Naive thymus-derived CD4-positive, alpha-beta T cell (primary cell): ENCODE measurements at regions of chr17 and their contacts with region 1.

Region 1: DNA sequence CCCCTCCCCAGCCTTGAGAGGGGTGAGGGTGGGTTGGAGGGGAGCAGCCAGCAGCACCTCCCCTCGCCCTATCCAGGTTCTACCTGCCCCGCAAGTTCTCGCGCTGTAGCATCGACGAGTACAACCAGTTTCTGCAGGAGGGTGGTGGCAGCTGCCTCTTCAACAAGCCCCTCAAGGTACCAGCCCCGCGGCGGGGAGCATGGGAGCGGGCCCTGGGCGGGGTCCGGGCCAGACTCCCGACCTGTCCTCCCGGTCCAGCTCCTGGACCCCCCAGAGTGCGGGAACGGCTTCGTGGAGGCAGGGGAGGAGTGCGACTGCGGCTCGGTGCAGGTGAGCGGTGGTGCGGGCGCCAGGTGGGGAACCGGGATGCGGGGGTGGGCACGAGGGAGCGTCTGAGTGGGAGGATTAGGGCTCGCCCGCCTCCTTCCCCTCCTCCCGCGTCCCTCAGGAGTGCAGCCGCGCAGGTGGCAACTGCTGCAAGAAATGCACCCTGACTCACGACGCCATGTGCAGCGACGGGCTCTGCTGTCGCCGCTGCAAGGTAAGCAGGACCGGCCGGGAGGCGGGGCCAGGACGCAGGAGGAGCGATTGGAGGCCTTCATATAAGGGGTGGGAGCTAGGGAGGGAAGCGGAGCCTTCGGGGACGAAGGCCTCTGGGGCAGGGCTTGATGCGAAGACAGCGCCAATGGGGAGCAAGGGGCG is 16.5 kb downstream of the ADAM11 start:
- DNase-seq: peak in 8 of 9 donors; percentile 83 to 95 (median 94)
- ATAC-seq: peak; percentile 96
- H3K4me3 ChIP-seq: peak overlapping the region; percentile 87
- H3K4me3 Mint-ChIP-seq: peak overlapping the region; percentile 88 to 93 (median 90)
- H3K27ac ChIP-seq: peak overlapping the region; percentile 76
- H3K27ac Mint-ChIP-seq: peak overlapping the region in 7 of 9 donors; percentile 58 to 80 (median 73)
- H3K4me1 ChIP-seq: peaks cover 0 to 11% of the 10 kb centered on the region in 2 donors
- H3K4me1 Mint-ChIP-seq: peaks cover 0 to 14% (median 9%) of the 10 kb centered on the region in 7 donors
- H3K27me3 ChIP-seq: no peaks in the 10 kb centered on the region
- H3K27me3 Mint-ChIP-seq: peaks cover 0 to 10% (median 5%) of the 10 kb centered on the region in 5 donors

Region 2: DNA sequence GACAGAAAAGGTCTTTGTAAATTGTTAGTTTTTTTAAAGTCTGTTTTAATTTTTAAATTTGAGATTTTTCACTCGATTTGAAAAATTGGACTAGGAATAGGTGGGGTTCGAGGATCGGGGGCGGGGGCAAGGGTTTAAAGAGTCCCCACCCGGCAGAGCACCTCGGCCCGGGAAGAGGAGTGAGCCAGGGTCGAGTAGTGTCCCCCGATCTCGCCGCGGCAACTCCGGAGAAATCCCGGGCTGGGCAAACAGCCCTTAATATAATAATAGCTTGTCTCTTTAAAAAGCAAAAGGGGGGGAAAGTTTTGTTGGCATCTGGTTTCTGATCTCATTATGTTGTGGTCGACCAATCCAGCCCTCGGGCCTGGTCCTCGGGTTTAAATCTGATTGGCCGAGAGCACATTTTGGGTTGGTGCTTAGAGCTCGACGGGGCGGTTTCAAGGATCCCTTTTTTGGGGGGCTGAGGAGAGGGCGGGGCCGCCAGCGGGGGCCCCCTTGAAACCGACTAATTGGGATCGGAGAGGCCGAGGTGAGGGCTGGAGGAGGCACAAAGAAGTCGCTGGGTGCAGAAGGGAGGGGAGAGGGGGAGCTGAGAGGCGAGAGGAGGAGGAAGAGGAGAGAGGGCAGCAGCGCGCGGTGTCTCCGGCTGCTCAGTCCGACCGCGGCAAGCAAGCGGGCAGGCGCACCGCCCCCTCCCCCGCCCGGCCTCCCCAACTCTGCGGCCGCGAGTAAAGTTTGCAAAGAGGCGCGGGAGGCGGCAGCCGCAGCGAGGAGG is 218.3 kb before region 1 on chr17 and contains the start of gene FZD2:
- CTCF ChIA-PET with region 1: no interaction called
- POLR2A ChIA-PET with region 1: no interaction called
- intact Hi-C with region 1: loop called in 1 of 2 experiments (anchors 1 kb)
- DNase-seq: peak in 6 of 9 donors; percentile 5 to 41 (median 18)
- ATAC-seq: peak; percentile 83
- H3K4me3 ChIP-seq: peak within 1 kb of the TSS; percentile 70
- H3K4me3 Mint-ChIP-seq: peak within 1 kb of the TSS; percentile 88 to 97 (median 92)
- H3K27ac ChIP-seq: no peak within 1 kb of the TSS
- H3K27ac Mint-ChIP-seq: peak within 1 kb of the TSS in 4 of 9 donors; percentile 42 to 62 (median 58)
- H3K4me1 ChIP-seq: peaks cover 3 to 11% of the 10 kb centered on the region in 2 donors
- H3K4me1 Mint-ChIP-seq: peaks cover 18 to 33% (median 27%) of the 10 kb centered on the region in 7 donors
- H3K27me3 ChIP-seq: peaks cover 0 to 11% of the 10 kb centered on the region in 2 donors
- H3K27me3 Mint-ChIP-seq: peaks cover 69 to 86% (median 70%) of the 10 kb centered on the region in 5 donors
- total RNA-seq, gene FZD2: 0.16 to 1.7 (median 0.19) TPM in 3 of 5 experiments, not detected in the others

Region 3: GRCh38 chr17:44864866-44865660 is 89.8 kb after region 1 on chr17:
- CTCF ChIA-PET with region 1: interaction called, 146 read pairs
- POLR2A ChIA-PET with region 1: interaction called, 5 read pairs
- intact Hi-C with region 1: loop called (anchors 1 kb)
- DNase-seq: peak; percentile 37 to 76 (median 65)
- ATAC-seq: peak; percentile 86
- H3K4me3 ChIP-seq: no peak overlapping the region
- H3K4me3 Mint-ChIP-seq: no peak overlapping the region
- H3K27ac ChIP-seq: no peak overlapping the region
- H3K27ac Mint-ChIP-seq: no peak overlapping the region
- H3K4me1 ChIP-seq: no peaks in the 10 kb centered on the region
- H3K4me1 Mint-ChIP-seq: no peaks in the 10 kb centered on the region
- H3K27me3 ChIP-seq: no peaks in the 10 kb centered on the region
- H3K27me3 Mint-ChIP-seq: no peaks in the 10 kb centered on the region

Region 4: DNA sequence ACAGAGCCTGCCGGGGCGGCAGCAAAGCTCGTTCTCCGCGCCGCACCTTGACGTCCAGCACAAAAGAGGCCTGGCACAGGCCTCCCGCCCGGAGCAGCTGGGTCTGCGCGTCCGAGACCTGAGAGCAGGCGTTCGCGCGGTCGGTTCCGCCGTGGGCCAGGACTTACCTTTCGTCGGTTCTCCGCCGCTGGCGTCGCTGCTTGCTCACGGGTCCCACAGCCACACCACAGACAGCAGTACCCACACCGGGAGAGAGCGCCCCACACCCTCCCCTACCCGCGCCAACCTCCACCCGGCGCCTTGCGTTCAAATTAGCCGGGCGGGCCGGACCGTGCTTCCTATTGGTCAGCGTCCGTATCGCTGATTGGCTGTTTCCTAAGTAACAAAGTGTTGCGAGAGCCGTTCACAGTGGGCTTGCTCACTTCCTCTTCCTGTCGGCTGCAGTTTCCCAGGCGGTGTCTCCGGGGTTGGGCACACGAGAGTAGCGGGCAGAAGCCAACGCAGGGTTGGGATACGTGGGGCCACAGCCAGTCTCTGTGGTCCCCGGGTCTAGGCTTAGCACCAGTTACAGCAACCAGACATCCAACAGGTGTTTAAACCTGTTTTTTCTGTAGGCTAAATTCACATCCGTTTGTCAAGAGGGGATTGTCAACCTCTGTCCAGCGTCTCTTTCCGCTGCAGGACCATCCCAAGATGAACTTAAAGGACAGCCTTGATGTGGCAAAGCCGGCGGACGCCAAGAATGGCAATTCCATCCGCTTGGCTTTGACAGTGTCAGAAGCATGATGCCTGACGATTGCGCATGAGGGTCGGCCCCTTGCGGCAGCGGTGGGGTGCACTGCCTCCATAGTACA is 172.4 kb after region 1 on chr17 and contains the start of gene KIF18B:
- CTCF ChIA-PET with region 1: no interaction called
- POLR2A ChIA-PET with region 1: no interaction called
- intact Hi-C with region 1: loop called in 1 of 2 experiments (anchors 5 kb)
- DNase-seq: peak; percentile 73 to 91 (median 86)
- ATAC-seq: peak; percentile 99
- H3K4me3 ChIP-seq: peak within 1 kb of the TSS; percentile 83
- H3K4me3 Mint-ChIP-seq: peak within 1 kb of the TSS; percentile 85 to 98 (median 93)
- H3K27ac ChIP-seq: peak within 1 kb of the TSS; percentile 69
- H3K27ac Mint-ChIP-seq: peak within 1 kb of the TSS; percentile 86 to 98 (median 93)
- H3K4me1 ChIP-seq: peaks cover 5 to 6% of the 10 kb centered on the region in 2 donors
- H3K4me1 Mint-ChIP-seq: peaks cover 0 to 40% (median 5%) of the 10 kb centered on the region in 7 donors
- H3K27me3 ChIP-seq: no peaks in the 10 kb centered on the region
- H3K27me3 Mint-ChIP-seq: peaks cover 0 to 7% (median 0%) of the 10 kb centered on the region in 5 donors
- total RNA-seq, gene KIF18B: 0.17 to 57.2 TPM in 2 of 5 experiments, not detected in the others

Region 5: DNA sequence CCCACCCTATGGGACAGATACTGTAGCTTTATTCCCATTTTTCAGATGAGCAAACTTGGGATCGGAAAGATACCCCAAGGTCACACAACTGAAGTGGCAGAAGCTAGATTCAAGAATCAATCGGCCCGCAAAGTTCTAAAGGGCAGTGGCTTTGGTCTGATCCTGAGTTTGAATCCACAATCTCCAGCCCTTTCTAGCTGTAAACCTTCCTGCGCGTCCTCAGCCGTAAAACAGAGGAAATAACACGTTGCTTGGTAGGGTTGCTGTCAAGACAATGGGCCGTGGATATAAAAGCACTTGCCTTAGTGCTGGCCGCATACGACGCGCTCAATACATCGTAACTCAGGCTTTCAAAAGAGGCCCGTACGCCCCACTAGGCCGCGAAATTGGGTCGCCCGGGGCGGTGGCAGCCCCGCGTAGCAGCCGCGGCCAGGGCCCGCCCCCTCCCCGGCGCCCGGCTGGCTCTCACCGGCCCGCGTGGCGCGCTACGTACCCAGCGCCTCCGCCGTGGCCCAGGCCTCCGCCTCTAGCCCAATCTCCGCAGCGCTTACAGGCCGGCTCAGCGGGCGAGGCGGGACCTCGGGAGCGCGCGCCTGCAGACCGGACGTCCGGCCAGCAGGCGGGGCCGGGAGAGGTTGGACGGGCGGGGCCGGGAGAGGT is 275.9 kb after region 1 on chr17 and contains the start of gene DCAKD:
- CTCF ChIA-PET with region 1: no interaction called
- POLR2A ChIA-PET with region 1: no interaction called
- intact Hi-C with region 1: loop called in 1 of 2 experiments (anchors 1 kb)
- DNase-seq: peak; percentile 78 to 93 (median 84)
- ATAC-seq: peak; percentile 99
- H3K4me3 ChIP-seq: peak within 1 kb of the TSS; percentile 61
- H3K4me3 Mint-ChIP-seq: peak within 1 kb of the TSS; percentile 87 to 96 (median 90)
- H3K27ac ChIP-seq: peak within 1 kb of the TSS; percentile 91
- H3K27ac Mint-ChIP-seq: peak within 1 kb of the TSS; percentile 85 to 98 (median 96)
- H3K4me1 ChIP-seq: peaks cover 19 to 26% of the 10 kb centered on the region in 2 donors
- H3K4me1 Mint-ChIP-seq: peaks cover 11 to 54% (median 41%) of the 10 kb centered on the region in 7 donors
- H3K27me3 ChIP-seq: no peaks in the 10 kb centered on the region
- H3K27me3 Mint-ChIP-seq: no peaks in the 10 kb centered on the region
- total RNA-seq, gene DCAKD: 14.2 to 36.8 (median 29.8) TPM

Region 6: DNA sequence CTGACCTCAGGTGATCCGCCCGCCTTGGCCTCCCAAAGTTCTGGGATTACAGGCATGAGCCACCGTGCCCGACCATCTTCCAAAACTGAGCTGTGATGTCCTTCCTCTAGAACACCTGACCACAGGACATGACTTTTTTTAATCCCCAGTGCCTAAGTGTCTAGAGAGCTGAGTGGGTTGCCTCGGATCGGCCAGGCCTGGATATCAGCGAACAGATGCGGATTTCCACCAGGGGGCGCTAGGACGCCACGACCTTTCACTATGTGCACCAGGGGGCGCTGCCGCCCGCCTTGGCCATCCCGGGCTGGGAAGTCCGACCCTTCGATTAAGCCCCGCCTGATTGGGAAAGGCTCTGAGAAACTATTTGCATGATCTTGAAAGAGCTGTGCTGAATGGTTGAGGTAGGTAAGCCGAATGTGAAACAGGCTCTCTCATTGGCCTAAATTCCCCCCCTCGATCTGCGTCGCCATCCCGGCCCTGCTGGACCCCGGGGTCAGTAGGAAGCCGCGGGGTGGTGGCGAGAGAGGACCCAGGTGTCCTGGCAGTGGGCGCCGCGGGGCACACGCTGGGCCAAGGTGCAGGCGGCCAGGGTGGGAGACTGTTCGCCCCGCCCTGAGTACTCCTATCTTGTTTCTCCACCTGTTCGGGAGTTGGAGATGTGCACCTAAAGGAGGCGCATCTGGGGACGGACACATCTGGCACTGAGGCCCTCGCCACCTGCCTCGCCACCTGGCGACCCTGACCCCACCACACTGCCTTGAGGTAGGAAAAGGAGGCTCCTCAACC is 360.1 kb after region 1 on chr17 and contains the start of gene ACBD4:
- CTCF ChIA-PET with region 1: no interaction called
- POLR2A ChIA-PET with region 1: no interaction called
- intact Hi-C with region 1: loop called (anchors 1 to 5 kb)
- DNase-seq: peak; percentile 95 to 100 (median 98)
- ATAC-seq: peak; percentile 93
- H3K4me3 ChIP-seq: peak within 1 kb of the TSS; percentile 94
- H3K4me3 Mint-ChIP-seq: peak within 1 kb of the TSS; percentile 87 to 95 (median 90)
- H3K27ac ChIP-seq: peak within 1 kb of the TSS; percentile 76
- H3K27ac Mint-ChIP-seq: peak within 1 kb of the TSS; percentile 75 to 92 (median 82)
- H3K4me1 ChIP-seq: peaks cover 12% of the 10 kb centered on the region in 2 donors
- H3K4me1 Mint-ChIP-seq: peaks cover 9 to 25% (median 21%) of the 10 kb centered on the region in 7 donors
- H3K27me3 ChIP-seq: no peaks in the 10 kb centered on the region
- H3K27me3 Mint-ChIP-seq: peaks cover 0 to 8% (median 0%) of the 10 kb centered on the region in 5 donors
- total RNA-seq, gene ACBD4: 17.9 to 59.5 (median 31.3) TPM